ENCODE measurements at regions of chr2 and their contacts with region 1.

Region 1: DNA sequence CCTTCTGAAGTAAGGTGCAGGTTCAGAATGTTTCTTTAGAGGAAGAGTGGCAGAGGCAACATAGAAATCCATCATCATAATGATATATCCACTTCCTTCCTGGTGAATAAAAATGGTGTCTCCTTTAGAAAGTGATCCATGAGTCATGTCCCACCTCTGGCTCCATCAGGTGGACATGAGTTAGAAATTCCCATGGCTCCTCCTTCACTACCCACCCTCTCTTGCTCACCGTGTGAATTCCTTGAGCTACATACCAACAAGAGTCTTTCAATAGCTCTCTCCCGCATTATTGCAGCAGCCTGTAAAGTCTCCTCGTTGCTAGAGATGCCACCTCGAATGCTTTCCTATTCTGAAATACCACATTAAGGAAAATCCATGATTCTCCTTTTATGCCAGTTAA is 317.6 kb downstream of the LNPK start:
- DNase-seq: no peak
- ATAC-seq: no peak
- H3K4me3 ChIP-seq: no peak overlapping the region
- H3K27ac ChIP-seq: no peak overlapping the region
- H3K4me1 ChIP-seq: no peaks in the 10 kb centered on the region
- H3K27me3 ChIP-seq: peaks cover 0 to 76% (median 52%) of the 10 kb centered on the region in 7 donors
- CTCF ChIP-seq: no peak

Region 2: GRCh38 chr2:175366815-175367214 is 317.6 kb before region 1 on chr2:
- intact Hi-C with region 1: loop called in 2 of 10 experiments (anchors 10 kb)
- DNase-seq: peak in 1 of 2 donors; percentile 18
- ATAC-seq: peak in 3 of 8 donors; percentile 64 to 73 (median 67)
- H3K4me3 ChIP-seq: no peak overlapping the region
- H3K27ac ChIP-seq: no peak overlapping the region
- H3K4me1 ChIP-seq: no peaks in the 10 kb centered on the region
- H3K27me3 ChIP-seq: peaks cover 0 to 85% (median 75%) of the 10 kb centered on the region in 7 donors
- CTCF ChIP-seq: peak; percentile 50 to 84 (median 72)

Region 3: GRCh38 chr2:176079831-176080539 is 395.5 kb after region 1 on chr2:
- intact Hi-C with region 1: loop called in 6 of 10 experiments (anchors 5 kb)
- DNase-seq: peak in 1 of 2 donors; percentile 47
- ATAC-seq: peak in 6 of 8 donors; percentile 33 to 80 (median 61)
- H3K4me3 ChIP-seq: peak overlapping the region in 4 of 10 donors; percentile 8 to 31 (median 23)
- H3K27ac ChIP-seq: no peak overlapping the region
- H3K4me1 ChIP-seq: peaks cover 0 to 50% (median 12%) of the 10 kb centered on the region in 9 donors
- H3K27me3 ChIP-seq: peaks cover 72 to 100% (median 98%) of the 10 kb centered on the region in 7 donors
- CTCF ChIP-seq: peak; percentile 25 to 75 (median 70)

Measured in heart right ventricle (tissue), 16 donors.